Ascending aorta (tissue), 2 donors: ENCODE measurements at regions of chr10 and their contacts with region 1.

Region 1: GRCh38 chr10:58952747-58953466 is 223.5 kb upstream of the PHYHIPL start:
- DNase-seq: peak in 1 of 2 donors; percentile 72
- H3K4me3 ChIP-seq: no peak overlapping the region
- H3K27ac ChIP-seq: peak overlapping the region in 1 of 2 donors; percentile 1
- H3K4me1 ChIP-seq: peaks cover 0 to 7% of the 10 kb centered on the region in 2 donors
- H3K27me3 ChIP-seq: no peaks in the 10 kb centered on the region
- CTCF ChIP-seq: peak; percentile 74 to 88 (median 84)

Region 2: DNA sequence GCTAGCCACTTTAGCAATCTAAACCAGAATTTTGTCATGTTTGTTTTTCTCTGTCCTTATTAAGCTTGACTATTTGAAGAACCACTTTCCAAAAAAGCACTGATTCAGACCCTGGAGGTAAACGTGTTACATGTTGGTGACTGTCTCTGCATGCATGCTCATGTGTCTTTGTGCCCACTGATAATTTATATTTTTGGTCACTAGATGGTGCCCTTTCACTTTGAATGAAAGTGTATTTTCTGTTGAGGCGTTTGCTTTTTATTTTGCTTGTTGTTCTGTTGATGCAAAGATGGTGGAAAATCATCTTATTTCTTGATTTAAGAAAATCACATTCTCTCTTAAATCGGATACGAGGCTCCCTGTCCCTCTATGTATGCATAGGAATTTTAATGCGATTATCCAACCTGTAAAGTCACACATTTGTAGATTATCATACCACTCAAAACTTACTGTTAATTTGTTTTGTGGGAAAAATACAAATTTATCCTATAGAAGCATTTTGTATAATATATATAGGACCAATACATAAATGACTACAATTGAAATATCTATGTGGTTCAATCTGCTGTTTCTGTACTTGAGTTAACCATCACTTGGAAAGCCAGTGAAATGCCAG is 170.9 kb before region 1 on chr10:
- intact Hi-C with region 1: loop called (anchors 5 kb)
- DNase-seq: no peak
- H3K4me3 ChIP-seq: no peak overlapping the region
- H3K27ac ChIP-seq: no peak overlapping the region
- H3K4me1 ChIP-seq: peaks cover 0 to 4% of the 10 kb centered on the region in 2 donors
- H3K27me3 ChIP-seq: no peaks in the 10 kb centered on the region
- CTCF ChIP-seq: peak; percentile 34 to 70 (median 58)

Region 3: DNA sequence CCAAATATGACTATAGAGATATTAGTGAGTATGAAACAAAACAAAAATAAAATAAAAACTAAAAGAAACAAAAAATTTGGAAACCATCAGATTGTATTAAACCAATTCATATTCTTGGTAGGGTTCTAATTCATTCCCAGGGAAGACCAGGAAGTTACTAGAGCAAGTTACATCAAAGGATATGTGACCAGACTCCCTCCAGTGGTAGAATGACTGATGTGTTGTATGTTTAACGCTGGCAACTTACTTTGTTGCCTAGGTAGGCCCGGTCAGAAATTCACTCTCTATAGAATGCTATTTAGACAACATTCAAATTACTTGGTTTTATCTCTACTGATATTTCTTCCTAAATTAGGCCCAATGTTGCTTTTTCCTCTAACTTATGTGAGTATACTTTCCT is 228.8 kb after region 1 on chr10:
- intact Hi-C with region 1: loop called (anchors 2 kb)
- DNase-seq: no peak
- H3K4me3 ChIP-seq: no peak overlapping the region
- H3K27ac ChIP-seq: no peak overlapping the region
- H3K4me1 ChIP-seq: peaks cover 4 to 8% of the 10 kb centered on the region in 2 donors
- H3K27me3 ChIP-seq: no peaks in the 10 kb centered on the region
- CTCF ChIP-seq: peak; percentile 10 to 45 (median 11)

Region 4: GRCh38 chr10:59387951-59388670 is 435.2 kb after region 1 on chr10:
- intact Hi-C with region 1: loop called (anchors 10 kb)
- DNase-seq: no peak
- H3K4me3 ChIP-seq: no peak overlapping the region
- H3K27ac ChIP-seq: peak overlapping the region; percentile 79 to 89
- H3K4me1 ChIP-seq: peaks cover 0 to 6% of the 10 kb centered on the region in 2 donors
- H3K27me3 ChIP-seq: no peaks in the 10 kb centered on the region
- CTCF ChIP-seq: no peak

Region 5: DNA sequence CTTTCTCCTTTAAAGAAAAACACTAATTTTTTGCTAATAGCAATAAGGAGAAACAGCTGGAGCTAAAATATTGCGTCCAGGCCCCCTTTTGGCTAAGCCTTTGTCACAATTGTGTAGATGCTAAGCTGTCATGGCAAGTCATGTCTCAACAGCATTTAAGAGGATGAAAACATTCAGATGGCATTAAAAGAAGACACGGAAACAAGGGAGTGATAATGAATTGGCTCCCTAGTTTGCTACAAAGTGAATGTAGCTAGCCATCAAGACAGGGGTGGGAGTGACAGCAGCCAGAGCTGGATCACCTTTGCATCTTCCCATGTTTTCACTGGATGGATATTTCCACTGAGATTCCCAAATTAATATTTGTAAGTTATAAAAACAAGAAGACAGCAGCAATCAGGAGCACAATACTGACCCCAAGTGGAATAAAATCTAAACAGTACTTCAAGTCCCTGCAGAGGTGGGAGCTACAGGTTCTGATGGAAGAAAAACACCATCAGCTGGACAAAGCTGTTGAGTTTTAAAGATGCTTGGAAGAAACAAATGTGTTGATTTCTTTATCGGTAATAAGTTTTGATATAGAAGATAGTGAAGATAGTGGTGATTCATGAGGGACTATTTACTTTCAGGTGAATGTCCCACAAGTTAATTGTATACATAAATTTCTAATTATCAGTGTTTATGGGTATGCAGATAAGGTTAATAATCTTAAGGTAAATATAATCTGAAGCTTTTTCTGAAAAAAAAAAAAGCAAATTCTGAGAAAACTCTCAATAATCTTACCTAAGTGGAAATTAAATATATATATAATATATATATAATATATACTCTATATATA is 627.3 kb after region 1 on chr10:
- intact Hi-C with region 1: loop called (anchors 10 kb)
- DNase-seq: no peak
- H3K4me3 ChIP-seq: no peak overlapping the region
- H3K27ac ChIP-seq: no peak overlapping the region
- H3K4me1 ChIP-seq: no peaks in the 10 kb centered on the region
- H3K27me3 ChIP-seq: no peaks in the 10 kb centered on the region
- CTCF ChIP-seq: peak; percentile 23 to 57 (median 28)